Panc1 (cell line): ENCODE measurements at regions of chr7 and their contacts with region 1.

Region 1: DNA sequence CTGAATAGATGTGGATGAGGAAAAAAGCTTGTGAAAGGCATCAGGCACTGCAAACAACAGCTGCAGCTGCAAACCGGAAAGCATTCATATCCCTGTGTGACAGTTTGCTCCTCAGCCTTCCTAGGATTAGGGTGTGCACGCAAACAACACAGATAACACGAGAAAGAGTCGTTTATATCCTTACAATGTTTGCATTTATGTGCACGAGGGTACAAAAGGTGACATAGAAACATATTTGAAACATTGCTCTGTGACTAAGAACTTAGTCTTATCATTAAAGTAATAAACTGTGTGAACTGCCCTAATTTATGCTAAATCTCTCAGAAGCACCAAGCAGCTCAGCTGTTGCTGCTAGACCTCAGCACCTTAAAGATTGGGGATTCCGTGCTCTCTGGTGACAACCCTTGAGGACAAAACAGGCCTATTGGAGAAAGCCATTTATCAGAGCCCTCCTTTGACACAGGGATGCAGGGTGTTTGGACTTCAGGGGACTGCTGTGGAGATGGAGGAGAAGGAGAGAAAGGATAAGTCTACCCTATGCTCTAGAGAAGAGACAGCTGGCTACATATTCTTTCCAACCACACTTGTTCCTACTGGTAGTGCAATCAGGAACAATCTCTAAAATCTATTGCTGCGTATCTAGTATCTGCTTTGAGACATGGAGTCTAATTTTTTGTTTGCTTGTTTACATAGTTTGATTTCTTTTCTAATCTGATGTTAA is 176.2 kb downstream of the GNAT3 start:
- DNase-seq: no peak
- ATAC-seq: 0 out of 2 replicates have a peak, but pooled peaks have one; percentile 51
- H3K4me3 ChIP-seq: no peak overlapping the region
- H3K27ac ChIP-seq: no peak overlapping the region
- H3K4me1 ChIP-seq: no peaks in the 10 kb centered on the region
- H3K27me3 ChIP-seq: no peaks in the 10 kb centered on the region; the same call in 1 of the 2 replicates
- CTCF ChIP-seq: no peak

Region 2: GRCh38 chr7:80134536-80135320 is 200.9 kb before region 1 on chr7 and contains the start of gene GNAI1:
- CTCF ChIA-PET with region 1: no interaction called
- POLR2A ChIA-PET with region 1: no interaction called
- in situ Hi-C with region 1: no loop called
- intact Hi-C with region 1: no loop called
- DNase-seq: no peak
- ATAC-seq: peak; percentile 91
- H3K4me3 ChIP-seq: peak within 1 kb of the TSS; percentile 65 to 94
- H3K27ac ChIP-seq: peak within 1 kb of the TSS; percentile 78
- H3K4me1 ChIP-seq: peaks cover 25% of the 10 kb centered on the region
- H3K27me3 ChIP-seq: no peaks in the 10 kb centered on the region
- CTCF ChIP-seq: peak; percentile 78
- total RNA-seq, gene GNAI1: 19.2 TPM

Region 3: DNA sequence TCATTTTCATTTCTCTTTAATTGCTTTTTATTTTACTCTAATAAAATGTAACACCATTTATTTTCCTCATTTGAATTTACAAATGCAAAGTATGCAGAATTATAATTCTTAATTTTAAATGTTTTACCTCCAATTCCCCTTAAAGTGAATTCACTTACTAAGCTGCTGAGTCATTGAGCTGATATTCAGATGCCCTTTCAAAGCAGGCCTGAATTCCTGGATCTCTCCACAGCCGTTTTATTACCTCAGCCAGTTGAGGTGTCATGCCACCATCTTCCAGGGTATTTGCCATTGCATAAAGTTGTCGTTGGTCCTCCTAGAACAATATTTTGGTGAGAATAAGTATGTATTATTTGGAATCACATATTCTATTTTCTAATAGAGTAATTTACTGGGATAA is 143.0 kb after region 1 on chr7:
- CTCF ChIA-PET with region 1: no interaction called
- POLR2A ChIA-PET with region 1: interaction called, 17 read pairs
- in situ Hi-C with region 1: no loop called
- intact Hi-C with region 1: no loop called
- DNase-seq: no peak
- ATAC-seq: no peak
- H3K4me3 ChIP-seq: no peak overlapping the region
- H3K27ac ChIP-seq: no peak overlapping the region
- H3K4me1 ChIP-seq: 0 out of 2 replicates have a peak, but pooled peaks cover 2% of the 10 kb centered on the region
- H3K27me3 ChIP-seq: no peaks in the 10 kb centered on the region
- CTCF ChIP-seq: no peak

Region 4: DNA sequence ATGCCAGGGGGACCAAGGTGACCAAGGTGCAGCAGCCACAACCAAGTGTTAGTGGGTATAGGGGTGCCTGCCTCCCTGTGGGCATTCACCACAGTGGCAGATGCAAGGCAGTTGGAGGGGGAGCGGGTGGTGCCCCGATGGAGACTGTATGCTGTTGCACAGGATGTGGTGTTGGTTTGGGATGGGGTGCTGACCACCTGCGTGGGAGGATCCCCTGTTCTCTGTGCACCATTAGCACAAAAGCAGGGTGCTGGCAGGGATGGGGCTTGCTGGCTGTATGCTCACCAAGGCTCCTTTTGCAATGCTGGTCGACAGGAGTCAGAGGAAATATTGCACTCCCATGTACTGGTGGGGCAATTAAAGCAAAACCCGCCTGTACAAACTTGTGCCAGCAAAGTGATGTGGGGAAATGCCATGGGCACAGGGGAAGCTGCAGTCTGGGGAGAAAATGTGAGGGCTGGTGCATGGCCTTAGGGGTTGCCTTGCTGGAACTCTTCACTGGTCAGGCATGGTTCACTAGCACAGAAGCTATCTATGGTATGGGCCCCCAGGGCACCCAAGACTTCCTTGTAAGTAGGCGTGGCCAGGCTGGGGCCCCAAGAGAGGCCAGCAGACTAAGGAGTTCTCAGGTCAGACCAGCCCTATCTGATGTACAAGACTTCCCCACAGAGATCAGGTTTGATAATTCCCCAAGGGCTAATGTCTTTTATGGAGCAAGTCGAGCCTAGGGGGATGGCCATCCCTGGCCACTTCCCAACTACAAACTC is 228.1 kb after region 1 on chr7:
- CTCF ChIA-PET with region 1: no interaction called
- POLR2A ChIA-PET with region 1: no interaction called
- in situ Hi-C with region 1: no loop called
- intact Hi-C with region 1: no loop called
- DNase-seq: no peak
- ATAC-seq: peak; percentile 30; the same call in 1 of the 2 replicates
- H3K4me3 ChIP-seq: no peak overlapping the region
- H3K27ac ChIP-seq: no peak overlapping the region
- H3K4me1 ChIP-seq: no peaks in the 10 kb centered on the region
- H3K27me3 ChIP-seq: no peaks in the 10 kb centered on the region
- CTCF ChIP-seq: no peak

Region 5: GRCh38 chr7:80841423-80842218 is 505.9 kb after region 1 on chr7:
- CTCF ChIA-PET with region 1: no interaction called
- POLR2A ChIA-PET with region 1: interaction called, 15 read pairs
- in situ Hi-C with region 1: no loop called
- intact Hi-C with region 1: no loop called
- DNase-seq: no peak
- ATAC-seq: 0 out of 2 replicates have a peak, but pooled peaks have one; percentile 19
- H3K4me3 ChIP-seq: no peak overlapping the region
- H3K27ac ChIP-seq: peak overlapping the region; percentile 73
- H3K4me1 ChIP-seq: peaks cover 92% of the 10 kb centered on the region
- H3K27me3 ChIP-seq: no peaks in the 10 kb centered on the region
- CTCF ChIP-seq: no peak